Breast epithelium (tissue), 4 donors: ENCODE measurements at regions of chr6 and their contacts with region 1.

Region 1: DNA sequence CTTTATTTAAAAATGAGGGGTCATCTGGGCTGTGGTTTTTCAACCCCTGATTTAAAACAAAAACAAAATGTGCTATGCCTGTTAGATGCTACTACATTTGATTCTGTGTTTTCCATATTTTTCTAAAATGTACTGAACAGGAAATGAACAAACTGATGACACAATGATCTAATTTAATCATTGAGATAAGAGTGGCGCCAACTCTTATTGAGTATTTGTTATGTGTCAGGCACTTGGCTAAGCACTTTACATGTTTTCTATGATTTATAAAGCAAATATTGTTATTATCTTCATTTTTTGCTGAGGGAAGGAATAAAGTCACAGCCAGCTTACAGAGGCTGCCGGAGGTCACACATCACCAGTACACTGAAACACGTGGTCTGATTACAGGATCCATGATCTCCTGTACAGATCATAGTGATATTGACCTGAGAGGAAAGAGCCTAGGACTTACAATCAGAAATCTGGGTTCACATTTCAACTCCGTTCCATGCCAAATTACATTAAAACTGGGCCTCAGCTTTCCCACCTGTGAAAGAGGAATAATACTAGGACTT is 166.7 kb downstream of the ESR1 start:
- DNase-seq: no peak
- H3K4me3 ChIP-seq: no peak overlapping the region
- H3K27ac ChIP-seq: no peak overlapping the region
- H3K4me1 ChIP-seq: no peaks in the 10 kb centered on the region
- H3K27me3 ChIP-seq: no peaks in the 10 kb centered on the region
- CTCF ChIP-seq: no peak
- POLR2A ChIP-seq: no peak

Region 2: DNA sequence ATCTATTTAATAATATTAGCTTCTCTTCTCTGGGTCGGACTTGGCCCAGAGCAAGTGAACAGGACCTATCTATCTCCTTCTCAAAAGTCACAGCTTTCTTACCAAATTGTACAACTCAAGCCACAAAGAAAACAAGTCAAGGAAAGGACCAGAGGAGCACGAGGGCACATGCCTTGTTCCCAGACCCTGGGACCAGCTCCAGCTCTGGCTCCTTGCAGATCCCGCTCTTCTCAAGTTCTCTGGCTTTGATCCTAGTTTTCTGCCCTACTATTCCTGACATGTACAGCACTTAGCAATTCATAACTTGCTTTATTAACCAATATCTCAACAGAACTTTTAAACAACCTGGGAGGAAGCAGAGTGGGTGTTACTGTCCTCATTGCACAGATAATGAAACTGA is 19.2 kb after region 1 on chr6:
- intact Hi-C with region 1: loop called (anchors 1 kb)
- DNase-seq: no peak
- H3K4me3 ChIP-seq: no peak overlapping the region
- H3K27ac ChIP-seq: no peak overlapping the region
- H3K4me1 ChIP-seq: no peaks in the 10 kb centered on the region
- H3K27me3 ChIP-seq: no peaks in the 10 kb centered on the region
- CTCF ChIP-seq: no peak
- POLR2A ChIP-seq: no peak

Region 3: GRCh38 chr6:152002306-152002705 is 28.2 kb after region 1 on chr6:
- intact Hi-C with region 1: loop called (anchors 2 kb)
- DNase-seq: no peak
- H3K4me3 ChIP-seq: no peak overlapping the region
- H3K27ac ChIP-seq: no peak overlapping the region
- H3K4me1 ChIP-seq: no peaks in the 10 kb centered on the region
- H3K27me3 ChIP-seq: no peaks in the 10 kb centered on the region
- CTCF ChIP-seq: no peak
- POLR2A ChIP-seq: no peak

Region 4: GRCh38 chr6:152026291-152026690 is 52.2 kb after region 1 on chr6:
- intact Hi-C with region 1: no loop called
- DNase-seq: no peak
- H3K4me3 ChIP-seq: peak overlapping the region in 1 of 3 donors; percentile 2
- H3K27ac ChIP-seq: no peak overlapping the region
- H3K4me1 ChIP-seq: no peaks in the 10 kb centered on the region
- H3K27me3 ChIP-seq: no peaks in the 10 kb centered on the region
- CTCF ChIP-seq: no peak
- POLR2A ChIP-seq: no peak